Right lobe of liver (tissue), 6 donors: ENCODE measurements at regions of chr9 and their contacts with region 1.

Region 1: GRCh38 chr9:113221003-113221799 is at the starts of genes FKBP15 and SLC31A1:
- DNase-seq: peak; percentile 98 to 99 (median 99)
- ATAC-seq: peak; percentile 96 to 99 (median 96)
- H3K4me3 ChIP-seq: peak within 1 kb of the TSS; percentile 73 to 94 (median 91)
- H3K27ac ChIP-seq: peak within 1 kb of the TSS; percentile 91 to 95 (median 92)
- H3K4me1 ChIP-seq: peaks cover 0 to 40% (median 7%) of the 10 kb centered on the region in 4 donors
- H3K27me3 ChIP-seq: no peaks in the 10 kb centered on the region
- CTCF ChIP-seq: no peak
- POLR2A ChIP-seq: peak; percentile 95
- total RNA-seq, gene FKBP15: 11.1 to 17.2 (median 12.8) TPM
- total RNA-seq, gene SLC31A1: 48.0 to 92.6 (median 71.5) TPM

Region 2: DNA sequence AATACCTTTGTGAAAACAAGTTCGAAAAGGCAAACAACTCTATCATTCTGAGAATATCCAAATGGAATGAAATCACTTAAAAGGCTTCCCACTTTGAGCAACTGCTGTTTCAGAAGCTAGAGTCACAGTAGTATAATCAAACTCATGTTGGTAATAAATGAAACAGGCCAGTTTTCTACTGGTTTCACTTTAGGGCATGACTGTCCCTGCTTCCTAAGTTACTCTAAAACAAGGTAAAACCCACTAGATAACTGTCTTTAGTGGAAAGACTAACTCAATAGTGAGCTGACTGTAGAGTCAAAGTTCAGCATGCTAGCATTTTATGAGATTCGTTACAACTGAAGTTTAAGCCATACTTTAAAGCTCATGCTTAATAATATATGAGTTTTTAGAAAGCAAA is 48.2 kb after region 1 on chr9:
- intact Hi-C with region 1: loop called in 1 of 2 experiments (anchors 5 kb)
- DNase-seq: no peak
- ATAC-seq: peak in 3 of 4 donors; percentile 28 to 38 (median 31)
- H3K4me3 ChIP-seq: no peak overlapping the region
- H3K27ac ChIP-seq: no peak overlapping the region
- H3K4me1 ChIP-seq: peaks cover 0 to 19% (median 9%) of the 10 kb centered on the region in 4 donors
- H3K27me3 ChIP-seq: no peaks in the 10 kb centered on the region
- CTCF ChIP-seq: no peak
- POLR2A ChIP-seq: no peak